ENCODE measurements at regions of chr15 and their contacts with region 1.

Region 1: GRCh38 chr15:65245096-65245856 is 34.0 kb upstream of the CILP start:
- DNase-seq: no peak
- H3K4me3 Mint-ChIP-seq: no peak overlapping the region
- H3K27ac Mint-ChIP-seq: no peak overlapping the region
- H3K4me1 Mint-ChIP-seq: peaks cover 5% of the 10 kb centered on the region
- H3K27me3 Mint-ChIP-seq: no peaks in the 10 kb centered on the region

Region 2: DNA sequence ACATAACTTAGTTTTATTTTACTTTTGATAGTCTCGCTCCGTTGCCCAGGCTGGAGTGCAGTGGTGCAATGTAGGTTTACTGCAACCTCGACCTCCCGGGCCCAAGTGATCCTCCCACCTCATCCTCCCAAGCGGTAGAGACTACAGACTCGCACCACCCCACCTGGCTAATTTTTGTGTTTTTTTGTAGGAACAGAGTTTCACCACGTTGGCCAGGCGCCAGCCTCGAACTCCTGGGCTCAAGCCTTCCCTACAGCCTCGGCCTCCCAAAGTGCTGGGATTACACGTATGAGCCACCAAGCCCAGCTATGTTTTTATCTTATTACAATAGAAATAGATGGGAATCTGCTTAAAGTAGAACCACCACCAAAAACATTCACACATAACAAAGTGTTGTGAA is 53.5 kb after region 1 on chr15:
- intact Hi-C with region 1: loop called (anchors 5 kb)
- DNase-seq: no peak
- H3K4me3 Mint-ChIP-seq: peak overlapping the region; percentile 85
- H3K27ac Mint-ChIP-seq: peak overlapping the region; percentile 93
- H3K4me1 Mint-ChIP-seq: peaks cover 26% of the 10 kb centered on the region
- H3K27me3 Mint-ChIP-seq: no peaks in the 10 kb centered on the region

Measured in activated CD4-positive, alpha-beta T cell treated with anti-CD3 and anti-CD28 coated beads, Interleukin-2, amount 10 ng/mL, durations not matched to agents 24 days and 14 days (primary cell).